ENCODE measurements at regions of chr3 and their contacts with region 1.

Region 1: GRCh38 chr3:16950845-16951244 is 66.1 kb downstream of the PLCL2 start:
- DNase-seq: no peak
- ATAC-seq: no peak
- H3K4me3 ChIP-seq: no peak overlapping the region
- H3K27ac ChIP-seq: no peak overlapping the region
- H3K4me1 ChIP-seq: peaks cover 0 to 54% (median 15%) of the 10 kb centered on the region in 9 donors
- H3K27me3 ChIP-seq: no peaks in the 10 kb centered on the region
- CTCF ChIP-seq: no peak

Region 2: DNA sequence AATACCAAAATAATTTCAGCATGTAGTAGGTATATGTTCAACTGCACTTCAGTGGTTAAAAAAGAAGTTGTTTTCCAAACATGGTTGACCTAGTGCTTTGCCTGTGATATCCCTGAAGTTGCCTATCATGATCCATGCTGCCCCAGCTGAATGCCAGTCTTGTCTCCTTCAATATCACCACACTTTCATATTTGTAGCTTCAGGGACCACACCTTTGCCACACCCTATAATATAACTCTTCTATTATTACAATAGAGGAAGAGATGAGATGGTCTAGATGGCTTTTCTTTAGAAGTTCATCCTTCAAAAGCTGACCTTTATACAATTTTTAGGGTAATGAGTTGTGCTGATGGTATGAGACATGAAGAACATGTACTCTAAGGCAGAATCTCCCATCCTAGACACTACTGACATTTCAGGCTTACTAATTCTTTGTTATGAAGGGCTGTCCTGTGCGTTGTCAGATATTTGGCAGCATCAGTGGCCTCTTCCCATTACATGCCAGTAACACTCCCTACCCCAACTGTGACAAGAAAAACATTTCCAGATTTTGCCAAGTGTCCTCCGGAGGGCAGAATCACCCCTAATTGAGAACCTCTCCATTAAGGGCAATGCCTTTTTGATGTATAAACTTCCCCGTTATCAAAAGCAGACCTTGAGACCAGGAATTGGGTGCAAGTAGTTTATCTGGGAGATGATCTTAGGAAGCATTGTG is 142.3 kb before region 1 on chr3:
- intact Hi-C with region 1: no loop called
- DNase-seq: no peak
- ATAC-seq: peak in 4 of 8 donors; percentile 44 to 65 (median 56)
- H3K4me3 ChIP-seq: no peak overlapping the region
- H3K27ac ChIP-seq: no peak overlapping the region
- H3K4me1 ChIP-seq: peaks cover 0 to 23% (median 8%) of the 10 kb centered on the region in 9 donors
- H3K27me3 ChIP-seq: no peaks in the 10 kb centered on the region
- CTCF ChIP-seq: peak in 1 of 9 donors; percentile 18

Region 3: GRCh38 chr3:16860234-16860633 is 90.6 kb before region 1 on chr3:
- intact Hi-C with region 1: no loop called
- DNase-seq: no peak
- ATAC-seq: no peak
- H3K4me3 ChIP-seq: no peak overlapping the region
- H3K27ac ChIP-seq: no peak overlapping the region
- H3K4me1 ChIP-seq: peaks cover 0 to under 1% (median 0%) of the 10 kb centered on the region in 9 donors
- H3K27me3 ChIP-seq: no peaks in the 10 kb centered on the region
- CTCF ChIP-seq: no peak

Region 4: DNA sequence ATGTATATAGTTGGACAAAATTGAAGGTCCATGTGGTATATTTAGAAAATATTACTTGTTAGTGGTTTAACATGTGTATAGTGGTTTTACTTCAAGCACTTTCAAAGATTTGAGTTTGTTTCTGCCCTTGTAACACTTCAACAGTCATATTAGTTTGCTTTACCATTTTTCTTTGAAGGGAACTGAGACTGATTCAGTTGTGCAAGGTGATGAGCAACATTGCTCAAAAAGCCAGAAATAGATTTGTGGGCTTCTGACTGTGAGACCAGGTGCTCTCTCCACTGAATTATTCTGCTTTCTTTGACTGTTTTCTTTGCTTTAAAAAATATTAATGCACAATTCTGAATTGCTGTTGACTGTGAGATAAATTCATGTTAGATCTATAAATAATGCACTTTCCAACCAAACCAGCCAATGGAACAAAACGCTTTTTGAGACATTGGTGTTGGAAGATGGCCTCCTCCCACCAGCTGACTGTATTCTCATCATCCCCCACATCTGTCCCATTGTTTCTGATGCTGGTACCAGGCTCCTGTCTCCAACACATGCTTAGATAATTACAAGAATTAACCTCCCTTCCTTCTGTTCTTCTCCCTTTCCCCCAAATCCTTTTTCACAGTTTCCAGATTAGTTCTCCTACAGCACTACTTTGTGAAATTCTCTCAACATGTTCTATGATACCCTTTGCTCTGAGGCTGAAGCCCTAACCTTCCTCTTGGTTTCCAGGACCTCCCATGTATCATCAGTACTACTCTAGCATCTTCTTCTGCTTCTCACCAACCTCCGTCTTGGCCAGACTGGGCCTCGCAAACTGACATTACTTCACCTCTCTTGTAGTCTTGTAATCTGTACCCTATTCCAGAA is 38.2 kb before region 1 on chr3:
- intact Hi-C with region 1: loop called in 1 of 10 experiments (anchors 2 kb)
- DNase-seq: no peak
- ATAC-seq: no peak
- H3K4me3 ChIP-seq: no peak overlapping the region
- H3K27ac ChIP-seq: no peak overlapping the region
- H3K4me1 ChIP-seq: peaks cover 2 to 84% (median 65%) of the 10 kb centered on the region in 9 donors
- H3K27me3 ChIP-seq: no peaks in the 10 kb centered on the region
- CTCF ChIP-seq: no peak

Measured in heart right ventricle (tissue), 16 donors.